Activated naive CD8-positive, alpha-beta T cell treated with anti-CD3 and anti-CD28 coated beads, Interleukin-2, amount 10 ng/mL, durations not matched to agents 7 days and 5 days (primary cell): ENCODE measurements at regions of chr6 and their contacts with region 1.

Region 1: DNA sequence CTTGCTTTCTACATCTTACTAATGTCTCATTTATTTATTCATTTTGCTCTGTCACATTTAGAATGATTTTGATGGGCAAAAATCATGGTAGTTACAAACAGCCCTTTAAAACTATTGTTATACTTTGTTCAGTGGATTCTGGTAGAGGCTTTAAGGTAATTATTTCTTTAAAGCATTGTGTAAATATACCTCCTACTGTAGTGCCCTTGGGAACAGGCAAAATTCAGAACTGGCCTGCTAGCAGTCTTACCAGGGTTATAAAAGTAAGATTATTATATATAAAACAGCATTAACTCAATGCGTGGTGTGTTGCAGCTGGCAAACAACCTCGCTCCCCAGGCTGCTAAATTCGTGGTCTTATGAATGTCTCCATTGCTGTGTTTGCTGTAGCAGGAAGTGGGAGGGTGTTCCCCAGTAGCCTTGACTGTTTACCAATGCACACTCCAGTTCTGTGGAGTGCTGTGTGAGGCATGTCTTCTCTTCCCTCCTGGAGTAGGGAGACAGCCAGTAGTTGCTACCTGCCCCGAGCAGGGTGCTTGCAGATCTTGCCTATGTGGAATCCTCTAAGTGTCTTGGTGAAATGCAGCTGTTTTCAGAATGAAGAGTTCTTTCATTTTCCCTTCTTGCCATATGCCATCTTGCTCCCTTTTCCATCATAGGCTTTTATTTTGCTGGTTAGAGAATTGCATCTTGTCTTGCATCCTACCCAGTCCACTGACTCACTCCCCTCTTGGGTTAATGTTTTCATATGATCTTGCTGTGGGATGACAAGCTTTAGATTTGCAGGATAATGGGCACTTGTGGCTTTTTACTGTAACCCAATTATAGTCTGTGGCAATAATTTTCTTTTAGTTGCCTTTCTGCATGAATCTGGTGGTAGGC is 45.3 kb downstream of the IGF2R start:
- DNase-seq: peak; percentile 39
- ATAC-seq: peak; percentile 23
- H3K4me3 Mint-ChIP-seq: peak overlapping the region; percentile 72
- H3K27ac Mint-ChIP-seq: peak overlapping the region; percentile 90
- H3K4me1 Mint-ChIP-seq: peaks cover 53% of the 10 kb centered on the region
- H3K27me3 Mint-ChIP-seq: no peaks in the 10 kb centered on the region

Region 2: DNA sequence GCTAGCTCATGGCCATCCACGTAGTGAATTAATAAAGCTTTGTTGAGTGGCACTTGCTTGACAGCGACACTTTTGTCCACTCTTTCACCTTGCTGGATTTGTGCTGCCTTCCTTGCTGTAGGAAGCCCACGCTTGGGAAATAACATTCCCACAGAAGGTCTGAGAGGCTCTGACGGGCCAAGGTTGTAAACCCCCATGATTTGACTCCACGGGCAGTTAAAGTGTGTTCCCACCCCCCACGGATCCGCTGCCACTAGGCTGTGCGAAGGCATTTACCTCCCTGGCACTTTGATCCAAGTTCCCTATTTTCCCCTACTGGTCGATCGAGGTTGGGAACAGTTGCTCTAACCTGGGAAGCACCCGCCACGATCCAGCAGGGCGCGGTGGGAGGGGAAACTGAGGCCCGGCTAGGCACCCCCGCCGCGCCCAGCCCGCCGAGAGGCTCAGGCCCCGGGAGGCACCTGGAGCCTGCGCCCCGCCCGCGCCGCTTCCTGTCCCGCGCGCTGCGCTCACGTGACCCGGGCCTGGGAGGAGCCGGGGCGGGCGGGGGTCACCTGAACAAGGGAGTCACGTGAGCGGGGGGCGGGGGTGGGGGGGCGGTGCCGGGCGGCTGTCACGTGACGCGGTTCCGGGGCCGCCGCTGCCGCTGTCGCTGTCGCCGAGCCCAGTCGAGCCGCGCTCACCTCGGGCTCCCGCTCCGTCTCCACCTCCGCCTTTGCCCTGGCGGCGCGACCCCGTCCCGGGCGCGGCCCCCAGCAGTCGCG is 45.6 kb before region 1 on chr6 and contains the start of gene IGF2R:
- POLR2A ChIA-PET with region 1: interaction called, 20 read pairs
- DNase-seq: peak; percentile 97
- ATAC-seq: peak; percentile 89
- H3K4me3 Mint-ChIP-seq: peak within 1 kb of the TSS; percentile 88
- H3K27ac Mint-ChIP-seq: peak within 1 kb of the TSS; percentile 89
- H3K4me1 Mint-ChIP-seq: peaks cover 33% of the 10 kb centered on the region
- H3K27me3 Mint-ChIP-seq: peaks cover 6% of the 10 kb centered on the region
- total RNA-seq, gene IGF2R: 75.0 to 77.7 TPM

Region 3: DNA sequence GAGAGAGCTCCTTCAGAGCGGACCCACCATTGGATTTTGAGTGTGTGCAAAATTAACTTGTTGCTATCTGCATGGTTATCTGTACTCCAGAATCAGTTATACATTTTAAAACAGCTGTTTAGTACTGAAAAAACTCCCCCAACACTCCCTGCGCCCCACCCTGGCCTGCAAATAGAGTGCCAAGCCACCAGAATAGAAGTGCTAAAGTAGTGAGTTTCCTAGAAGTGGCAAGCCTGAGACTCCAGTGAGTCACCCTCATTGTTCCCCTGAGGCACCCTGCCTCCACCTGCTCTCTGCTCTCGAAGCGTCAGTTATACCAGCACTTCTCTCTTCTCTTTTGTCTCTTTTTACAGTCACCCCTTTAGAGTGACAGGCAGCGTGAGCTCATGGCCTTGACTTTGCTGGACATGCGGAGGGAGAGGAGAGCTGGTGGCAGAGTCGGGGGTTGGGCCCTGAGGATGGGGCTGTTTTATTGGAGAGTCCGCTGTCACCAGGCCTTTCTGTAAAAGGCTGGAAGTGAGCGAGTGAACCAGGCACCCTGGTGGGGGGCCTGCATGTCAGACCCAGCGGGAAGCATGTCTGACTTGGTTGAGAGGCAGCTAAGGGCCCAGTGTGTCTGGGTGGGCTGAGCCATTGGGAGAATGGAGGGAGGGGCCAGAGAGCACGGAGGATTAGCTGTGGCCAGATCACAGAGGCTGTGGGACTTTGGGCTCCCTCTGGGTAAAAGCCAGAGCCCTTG is 34.9 kb before region 1 on chr6:
- POLR2A ChIA-PET with region 1: interaction called, 48 read pairs
- DNase-seq: peak; percentile 54
- ATAC-seq: peak; percentile 85
- H3K4me3 Mint-ChIP-seq: peak overlapping the region; percentile 75
- H3K27ac Mint-ChIP-seq: peak overlapping the region; percentile 91
- H3K4me1 Mint-ChIP-seq: peaks cover 80% of the 10 kb centered on the region
- H3K27me3 Mint-ChIP-seq: no peaks in the 10 kb centered on the region